ENCODE measurements at regions of chr10 and their contacts with region 1.

Region 1: GRCh38 chr10:73586583-73586984 is 4.6 kb downstream of the USP54 start:
- DNase-seq: peak; percentile 73 to 84
- H3K4me3 ChIP-seq: no peak overlapping the region
- H3K4me3 Mint-ChIP-seq: peak overlapping the region; percentile 37
- H3K27ac Mint-ChIP-seq: peak overlapping the region; percentile 39
- H3K4me1 ChIP-seq: peaks cover 47% of the 10 kb centered on the region
- H3K4me1 Mint-ChIP-seq: peaks cover 56% of the 10 kb centered on the region
- H3K27me3 ChIP-seq: no peaks in the 10 kb centered on the region
- H3K27me3 Mint-ChIP-seq: no peaks in the 10 kb centered on the region
- CTCF ChIP-seq: no peak

Region 2: DNA sequence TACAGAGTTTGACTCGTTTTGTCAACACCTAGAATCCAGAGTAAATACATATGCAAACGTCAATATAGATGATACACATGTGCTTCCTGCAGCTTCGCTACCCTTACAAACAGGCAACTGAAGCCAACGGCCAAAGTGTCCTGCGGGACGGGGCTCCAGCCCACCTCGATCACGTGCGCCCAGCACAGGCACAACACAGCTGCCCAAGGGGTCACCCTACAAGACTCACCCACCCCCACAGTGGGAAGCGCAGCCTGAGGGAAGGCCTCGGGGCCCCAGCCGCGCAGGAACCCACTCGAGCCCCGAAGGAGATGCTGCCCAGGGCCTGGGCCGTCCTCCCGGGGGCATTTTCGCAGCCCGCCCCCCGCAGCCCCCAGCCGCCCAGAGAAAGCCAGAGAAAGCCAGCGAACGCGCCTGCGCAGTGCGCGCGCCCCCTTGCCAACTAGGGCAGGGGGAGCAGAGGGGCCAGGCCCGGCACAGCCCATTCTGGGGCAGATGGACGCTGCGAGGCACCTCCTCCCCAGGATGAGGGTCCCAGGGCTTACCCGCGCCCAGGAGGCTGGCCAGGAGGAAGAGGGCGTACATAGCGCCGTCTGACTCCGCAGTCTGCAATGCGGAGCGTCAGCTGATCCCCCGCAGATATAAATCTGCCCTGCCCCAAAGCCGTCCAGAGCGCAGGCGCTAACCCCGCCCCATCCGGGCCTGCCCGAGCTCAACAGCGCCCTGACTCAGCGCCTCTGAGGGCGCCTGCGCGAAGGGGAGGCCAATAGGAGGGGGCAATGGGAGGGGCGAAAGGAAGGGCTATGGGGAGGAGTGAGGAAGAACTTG is 1735.7 kb before region 1 on chr10 and contains the start of gene PSAP:
- CTCF ChIA-PET with region 1: interaction called, 4 read pairs
- POLR2A ChIA-PET with region 1: interaction called, 3 read pairs
- intact Hi-C with region 1: loop called (anchors 1 kb)
- DNase-seq: peak; percentile 100
- H3K4me3 ChIP-seq: peak within 1 kb of the TSS; percentile 75
- H3K4me3 Mint-ChIP-seq: peak within 1 kb of the TSS; percentile 92
- H3K27ac Mint-ChIP-seq: peak within 1 kb of the TSS; percentile 90
- H3K4me1 ChIP-seq: peaks cover 20% of the 10 kb centered on the region
- H3K4me1 Mint-ChIP-seq: peaks cover 27% of the 10 kb centered on the region
- H3K27me3 ChIP-seq: no peaks in the 10 kb centered on the region
- H3K27me3 Mint-ChIP-seq: no peaks in the 10 kb centered on the region
- CTCF ChIP-seq: no peak
- total RNA-seq, gene PSAP: 1,227 and 1,316 TPM in 2 replicates

Region 3: DNA sequence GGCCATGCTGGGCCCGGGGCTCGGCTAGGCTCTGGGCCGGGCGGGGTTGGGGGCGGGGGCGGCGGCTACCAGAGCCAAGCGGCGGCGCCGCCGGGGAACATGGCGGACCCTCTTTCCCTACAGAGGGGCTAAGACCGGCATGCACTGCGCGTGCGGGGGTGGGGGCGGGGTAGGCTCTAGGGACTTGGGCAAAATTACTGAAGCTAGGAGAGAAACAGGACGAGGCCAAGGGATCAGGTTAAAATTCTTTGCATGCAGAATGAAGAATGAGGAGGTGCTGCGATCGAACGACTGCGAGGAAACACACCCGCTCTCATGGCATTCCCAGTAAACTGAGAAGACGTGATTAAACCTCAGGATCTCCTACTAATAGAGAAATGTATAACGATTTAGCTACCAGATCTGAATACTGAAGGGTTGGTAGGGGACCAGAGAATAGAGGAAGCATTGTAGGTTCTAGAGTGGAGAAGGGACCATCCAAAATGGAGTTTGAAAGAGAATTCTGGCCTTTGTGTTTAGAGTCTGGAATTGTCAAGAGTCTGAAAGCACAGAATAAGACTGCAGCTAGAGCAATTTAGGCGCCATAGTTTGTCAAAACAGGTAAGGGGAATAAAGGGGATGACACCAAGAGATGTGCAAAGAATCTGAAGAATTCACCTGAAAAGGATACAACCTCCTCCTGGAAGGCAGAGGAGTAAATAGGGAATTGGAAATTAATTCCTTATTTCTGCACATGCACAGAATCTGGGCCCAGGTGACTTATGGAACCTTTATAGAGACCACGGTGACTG is 90.5 kb before region 1 on chr10 and contains the start of gene PPP3CB:
- CTCF ChIA-PET with region 1: no interaction called
- POLR2A ChIA-PET with region 1: interaction called, 4 read pairs
- intact Hi-C with region 1: loop called (anchors 1 kb)
- DNase-seq: peak; percentile 93 to 98
- H3K4me3 ChIP-seq: peak within 1 kb of the TSS; percentile 86
- H3K4me3 Mint-ChIP-seq: peak within 1 kb of the TSS; percentile 89
- H3K27ac Mint-ChIP-seq: peak within 1 kb of the TSS; percentile 84
- H3K4me1 ChIP-seq: peaks cover 8% of the 10 kb centered on the region; the same call in 1 of the 2 replicates
- H3K4me1 Mint-ChIP-seq: peaks cover 27% of the 10 kb centered on the region
- H3K27me3 ChIP-seq: no peaks in the 10 kb centered on the region
- H3K27me3 Mint-ChIP-seq: no peaks in the 10 kb centered on the region
- CTCF ChIP-seq: no peak
- total RNA-seq, gene PPP3CB: 41.5 and 44.5 TPM in 2 replicates

Region 4: DNA sequence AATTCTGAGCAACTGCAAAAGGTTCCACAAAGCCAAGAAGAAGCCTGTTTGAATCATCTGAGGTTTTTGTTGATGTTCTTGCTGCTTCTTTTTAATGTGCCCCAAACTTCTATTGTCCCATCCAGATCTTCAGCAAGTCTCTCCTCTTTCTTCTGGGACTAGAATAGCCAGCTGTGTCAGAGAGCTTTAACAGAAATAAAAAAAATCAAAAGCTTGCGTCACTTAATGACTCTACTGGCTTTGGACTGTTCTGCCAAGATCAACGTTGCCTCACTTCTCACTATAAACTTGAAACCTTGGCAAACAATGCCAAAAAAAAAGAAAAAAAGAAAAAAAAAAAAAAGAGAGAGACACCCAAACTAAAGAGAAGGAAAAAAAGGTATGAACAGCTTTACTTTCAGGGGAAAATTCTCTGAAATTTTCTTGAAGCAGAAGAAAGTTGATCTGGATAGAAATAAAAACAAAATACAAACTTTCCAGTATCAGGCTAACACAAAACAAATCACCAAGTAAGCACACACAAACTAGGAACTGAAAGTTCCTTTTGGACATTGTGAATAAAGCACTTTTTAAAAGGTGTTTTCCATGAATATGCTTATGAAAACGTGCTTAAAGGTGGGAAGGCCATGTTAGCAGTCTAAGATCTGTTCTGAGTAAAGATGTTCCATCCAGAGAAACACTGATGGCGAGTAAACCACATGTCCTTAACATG is 10.2 kb before region 1 on chr10:
- CTCF ChIA-PET with region 1: interaction called, 9 read pairs
- POLR2A ChIA-PET with region 1: interaction called, 3 read pairs
- intact Hi-C with region 1: loop called (anchors 1 kb)
- DNase-seq: peak in 1 of 2 experiments; percentile 33
- H3K4me3 ChIP-seq: no peak overlapping the region
- H3K4me3 Mint-ChIP-seq: no peak overlapping the region
- H3K27ac Mint-ChIP-seq: no peak overlapping the region
- H3K4me1 ChIP-seq: peaks cover 23% of the 10 kb centered on the region
- H3K4me1 Mint-ChIP-seq: peaks cover 23% of the 10 kb centered on the region
- H3K27me3 ChIP-seq: no peaks in the 10 kb centered on the region
- H3K27me3 Mint-ChIP-seq: no peaks in the 10 kb centered on the region
- CTCF ChIP-seq: no peak

Region 5: DNA sequence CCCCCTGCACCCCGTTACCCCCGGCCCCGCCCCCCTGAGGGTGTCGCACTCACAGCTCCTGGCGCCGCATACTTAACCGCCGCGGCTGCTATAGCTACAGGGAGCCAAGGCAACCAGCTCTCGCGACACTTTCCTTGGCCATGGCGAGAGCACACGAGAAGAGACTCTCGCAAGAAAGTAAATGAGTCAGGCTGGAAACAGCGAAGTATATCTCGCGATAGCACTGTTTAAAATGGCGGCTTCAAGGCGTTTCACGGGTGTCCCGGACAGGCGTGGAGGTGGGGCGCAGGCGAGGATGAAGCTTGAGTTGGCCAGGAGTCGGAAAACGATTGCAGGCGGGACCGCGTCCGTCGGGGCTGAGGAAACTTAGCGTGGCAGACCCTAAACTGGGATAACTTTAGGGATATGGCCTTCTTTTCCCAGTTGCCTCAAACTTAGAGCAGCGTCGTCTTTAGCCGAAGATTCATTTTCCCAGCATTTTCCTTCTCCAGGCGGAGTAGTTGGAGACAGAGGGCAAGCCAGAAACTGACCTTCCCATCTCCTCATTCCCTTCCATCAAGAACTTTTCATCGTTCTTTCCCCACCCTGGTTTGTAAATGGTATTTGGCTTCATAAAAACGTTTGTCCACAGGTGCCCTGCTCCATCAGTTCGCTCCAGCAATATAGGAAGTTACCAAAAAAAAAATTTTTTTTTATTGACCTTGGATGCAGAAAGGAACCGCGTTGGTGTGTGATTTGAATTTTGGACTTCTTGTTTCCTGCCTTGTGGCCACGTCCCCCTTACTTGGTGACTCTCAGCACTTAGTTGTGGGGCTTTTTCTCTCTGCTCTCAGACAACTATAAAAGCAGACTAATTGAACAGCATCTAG is 39.5 kb after region 1 on chr10:
- CTCF ChIA-PET with region 1: interaction called, 8 read pairs
- POLR2A ChIA-PET with region 1: interaction called, 9 read pairs
- intact Hi-C with region 1: loop called (anchors 1 kb)
- DNase-seq: peak; percentile 93 to 96
- H3K4me3 ChIP-seq: peak overlapping the region; percentile 84
- H3K4me3 Mint-ChIP-seq: peak overlapping the region; percentile 99
- H3K27ac Mint-ChIP-seq: peak overlapping the region; percentile 100
- H3K4me1 ChIP-seq: peaks cover 9% of the 10 kb centered on the region
- H3K4me1 Mint-ChIP-seq: no peaks in the 10 kb centered on the region
- H3K27me3 ChIP-seq: no peaks in the 10 kb centered on the region
- H3K27me3 Mint-ChIP-seq: no peaks in the 10 kb centered on the region
- CTCF ChIP-seq: no peak

Region 6: DNA sequence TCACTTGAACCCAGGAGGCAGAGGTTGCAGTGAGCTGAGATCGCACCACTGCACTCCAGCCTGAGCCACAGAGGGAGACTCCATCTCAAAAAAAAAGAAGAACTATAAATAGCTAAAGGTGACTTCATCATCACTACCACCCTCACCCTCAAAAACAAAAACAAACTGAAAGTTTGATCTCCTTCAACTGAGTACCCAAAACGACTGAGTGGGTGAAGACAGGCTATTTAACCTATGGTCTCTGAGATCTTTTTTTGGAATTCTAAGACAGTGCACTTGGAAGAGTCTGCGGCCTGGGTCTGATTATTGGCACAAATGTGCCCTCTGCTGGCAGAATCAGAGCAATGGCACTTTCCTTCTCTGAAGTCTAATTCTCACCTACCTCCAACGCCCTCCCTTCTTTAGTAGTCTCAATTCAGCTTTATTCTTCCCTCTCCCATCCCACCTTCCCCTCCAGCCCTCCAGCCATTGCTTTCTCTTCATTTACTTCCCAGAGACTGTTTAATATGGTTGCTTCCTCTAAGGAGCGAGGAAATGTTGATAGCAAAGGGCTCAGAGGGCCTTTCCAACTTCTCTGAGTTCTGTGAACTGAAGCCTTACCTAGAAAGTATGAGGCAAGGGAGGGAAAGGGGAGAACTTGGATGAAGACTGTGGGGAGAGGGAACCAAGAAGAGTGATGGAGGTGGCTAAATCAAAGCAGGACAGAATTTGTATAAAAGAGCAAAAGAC is 57.6 kb after region 1 on chr10:
- CTCF ChIA-PET with region 1: no interaction called
- POLR2A ChIA-PET with region 1: no interaction called
- intact Hi-C with region 1: loop called (anchors 5 kb)
- DNase-seq: peak; percentile 58 to 71
- H3K4me3 ChIP-seq: no peak overlapping the region
- H3K4me3 Mint-ChIP-seq: no peak overlapping the region
- H3K27ac Mint-ChIP-seq: peak overlapping the region; percentile 40
- H3K4me1 ChIP-seq: peaks cover 21% of the 10 kb centered on the region
- H3K4me1 Mint-ChIP-seq: peaks cover 42% of the 10 kb centered on the region
- H3K27me3 ChIP-seq: no peaks in the 10 kb centered on the region
- H3K27me3 Mint-ChIP-seq: no peaks in the 10 kb centered on the region
- CTCF ChIP-seq: peak; percentile 86 to 91